Calu3 (cell line): ENCODE measurements at regions of chr2 and their contacts with region 1.

Region 1: GRCh38 chr2:67290451-67291290 is 106.5 kb upstream of the ETAA1 start:
- DNase-seq: peak; percentile 72
- H3K4me3 Mint-ChIP-seq: peak overlapping the region; percentile 55
- H3K27ac Mint-ChIP-seq: peak overlapping the region; percentile 97
- H3K4me1 Mint-ChIP-seq: peaks cover 66% of the 10 kb centered on the region
- H3K27me3 Mint-ChIP-seq: no peaks in the 10 kb centered on the region
- CTCF ChIP-seq: no peak

Region 2: DNA sequence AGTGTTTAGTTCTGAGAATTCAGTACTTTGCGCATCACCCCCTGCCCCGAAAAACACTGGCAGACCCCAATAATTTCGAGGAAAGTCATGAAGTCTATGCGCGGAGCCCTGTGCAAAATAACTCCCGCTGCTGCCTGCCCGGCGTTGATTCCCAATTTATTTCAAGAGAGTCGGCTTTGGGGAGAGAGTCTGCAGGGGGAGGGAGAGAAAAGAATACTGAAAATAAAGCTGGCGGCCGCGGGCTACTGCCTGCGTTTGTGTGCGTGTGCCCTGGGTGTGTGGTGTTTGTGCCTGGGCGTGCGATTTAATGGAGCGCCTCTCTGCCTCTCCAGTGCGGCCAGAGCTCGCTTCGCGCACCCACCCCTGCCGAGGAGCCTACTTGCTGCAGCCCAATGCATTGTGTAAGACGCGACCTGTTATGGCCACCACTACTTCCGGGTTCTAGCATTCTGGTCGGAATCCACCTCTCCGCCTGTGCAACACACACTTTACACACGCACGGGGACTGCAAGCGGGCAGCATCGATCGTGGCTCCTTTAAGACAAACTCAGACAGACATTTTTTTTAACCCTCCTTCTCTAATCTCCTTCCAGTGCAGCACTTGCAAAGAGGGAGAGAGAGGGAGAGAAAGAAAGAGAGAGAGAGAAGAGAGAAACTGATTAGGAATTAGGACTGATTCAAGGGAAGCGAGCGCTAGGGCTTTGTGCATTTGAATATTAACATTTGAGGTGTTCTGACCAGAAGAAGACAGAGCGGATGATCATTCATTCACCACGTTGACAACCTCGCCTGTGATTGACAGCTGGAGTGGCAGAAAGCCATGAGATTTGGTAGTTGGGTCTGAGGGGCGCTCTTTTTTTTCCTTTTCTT is 855.8 kb before region 1 on chr2 and contains the start of gene MEIS1:
- CTCF ChIA-PET with region 1: no interaction called
- intact Hi-C with region 1: loop called (anchors 10 kb)
- DNase-seq: peak; percentile 89
- H3K4me3 Mint-ChIP-seq: peak within 1 kb of the TSS; percentile 74
- H3K27ac Mint-ChIP-seq: peak within 1 kb of the TSS; percentile 75
- H3K4me1 Mint-ChIP-seq: peaks cover 19% of the 10 kb centered on the region
- H3K27me3 Mint-ChIP-seq: no peaks in the 10 kb centered on the region
- CTCF ChIP-seq: no peak
- total RNA-seq, gene MEIS1: 8.1 and 11.5 TPM in 2 replicates

Region 3: GRCh38 chr2:67130531-67131256 is 160.0 kb before region 1 on chr2:
- CTCF ChIA-PET with region 1: no interaction called
- intact Hi-C with region 1: loop called (anchors 10 kb)
- DNase-seq: no peak
- H3K4me3 Mint-ChIP-seq: no peak overlapping the region
- H3K27ac Mint-ChIP-seq: no peak overlapping the region
- H3K4me1 Mint-ChIP-seq: peaks cover 9% of the 10 kb centered on the region
- H3K27me3 Mint-ChIP-seq: no peaks in the 10 kb centered on the region
- CTCF ChIP-seq: no peak

Region 4: GRCh38 chr2:67259581-67260342 is 30.9 kb before region 1 on chr2:
- CTCF ChIA-PET with region 1: no interaction called
- intact Hi-C with region 1: loop called (anchors 1 kb)
- DNase-seq: peak; percentile 29
- H3K4me3 Mint-ChIP-seq: no peak overlapping the region
- H3K27ac Mint-ChIP-seq: peak overlapping the region; percentile 88
- H3K4me1 Mint-ChIP-seq: peaks cover 19% of the 10 kb centered on the region
- H3K27me3 Mint-ChIP-seq: no peaks in the 10 kb centered on the region
- CTCF ChIP-seq: no peak

Region 5: DNA sequence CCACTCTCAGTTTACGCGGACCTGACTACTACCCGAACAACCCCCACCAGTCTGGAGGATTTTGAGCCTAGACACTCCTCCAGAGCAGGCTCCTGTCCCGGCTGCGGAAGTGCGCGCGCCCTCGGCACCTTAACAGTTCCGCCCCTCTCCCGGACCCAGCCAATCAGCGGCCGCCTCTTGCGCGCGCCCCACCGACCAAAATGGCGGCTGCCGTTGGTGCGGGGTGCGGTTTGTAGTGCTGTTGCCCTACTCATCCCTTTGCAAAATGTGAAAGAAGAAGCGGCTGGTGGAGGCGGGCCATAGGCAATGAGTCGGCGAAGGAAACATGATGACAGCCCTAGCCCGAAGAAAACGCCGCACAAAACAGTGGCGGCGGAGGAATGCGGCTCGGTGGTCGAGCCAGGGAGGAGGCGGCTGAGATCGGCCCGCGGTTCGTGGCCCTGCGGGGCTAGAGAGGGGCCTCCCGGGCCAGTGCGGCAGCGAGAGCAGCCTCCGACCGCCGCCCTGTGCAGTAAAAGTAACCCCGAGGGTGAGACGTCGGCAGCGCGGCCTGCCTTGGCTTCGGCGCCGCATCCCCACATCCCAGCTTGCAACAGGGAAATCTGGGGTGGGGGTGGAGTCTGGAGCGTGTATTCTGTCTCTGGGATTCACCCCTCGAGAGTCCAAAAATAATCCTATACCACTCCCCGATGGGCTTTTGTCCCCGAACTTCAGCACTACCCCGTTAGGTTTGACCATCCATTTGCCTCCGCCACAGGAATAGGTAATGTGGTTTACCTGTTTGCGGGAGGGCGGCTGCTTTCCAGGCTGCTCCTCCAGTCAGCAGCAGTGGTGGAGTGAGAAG is 106.7 kb after region 1 on chr2 and contains the start of gene ETAA1:
- CTCF ChIA-PET with region 1: no interaction called
- intact Hi-C with region 1: loop called (anchors 5 kb)
- DNase-seq: peak; percentile 93
- H3K4me3 Mint-ChIP-seq: peak within 1 kb of the TSS; percentile 88
- H3K27ac Mint-ChIP-seq: peak within 1 kb of the TSS; percentile 90
- H3K4me1 Mint-ChIP-seq: peaks cover 36% of the 10 kb centered on the region
- H3K27me3 Mint-ChIP-seq: no peaks in the 10 kb centered on the region
- CTCF ChIP-seq: no peak
- total RNA-seq, gene ETAA1: 12.2 and 12.6 TPM in 2 replicates

Region 6: DNA sequence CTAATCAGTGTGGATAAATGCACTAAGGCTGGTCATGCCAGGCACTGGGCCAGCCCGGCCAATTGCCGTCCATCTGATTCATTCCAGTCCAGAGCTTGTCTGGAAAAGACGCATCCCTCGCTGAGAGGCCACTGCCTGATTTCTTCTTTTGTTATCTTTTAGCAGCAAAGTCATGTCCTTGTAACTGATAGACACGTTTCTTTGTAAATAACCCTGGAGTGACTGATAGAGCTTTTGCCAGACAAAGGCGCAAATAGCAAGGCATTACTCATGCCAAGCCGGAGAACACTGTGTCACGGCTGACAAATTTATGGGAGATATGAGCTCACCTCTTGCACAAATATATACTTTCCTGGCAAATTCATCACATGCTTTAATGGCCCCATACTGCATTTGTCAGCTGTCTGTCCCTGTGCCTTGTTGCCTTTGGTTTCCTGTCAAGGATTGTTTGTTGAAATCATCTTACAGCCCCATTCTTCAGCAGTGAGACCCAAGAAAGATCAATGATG is 270.8 kb after region 1 on chr2:
- CTCF ChIA-PET with region 1: no interaction called
- intact Hi-C with region 1: loop called (anchors 2 kb)
- DNase-seq: peak; percentile 61
- H3K4me3 Mint-ChIP-seq: peak overlapping the region; percentile 10
- H3K27ac Mint-ChIP-seq: peak overlapping the region; percentile 77
- H3K4me1 Mint-ChIP-seq: peaks cover 40% of the 10 kb centered on the region
- H3K27me3 Mint-ChIP-seq: no peaks in the 10 kb centered on the region
- CTCF ChIP-seq: no peak